GM18951 (cell line): ENCODE measurements at regions of chr9 and their contacts with region 1.

Region 1: GRCh38 chr9:27539479-27540441 is 10.1 kb upstream of the MOB3B start:
- POLR2A ChIP-seq: no peak

Region 2: GRCh38 chr9:27337833-27338526 is 201.8 kb before region 1 on chr9:
- in situ Hi-C with region 1: loop called (anchors 5 kb)
- POLR2A ChIP-seq: no peak

Region 3: GRCh38 chr9:27600256-27600655 is 60.5 kb after region 1 on chr9:
- in situ Hi-C with region 1: no loop called
- POLR2A ChIP-seq: no peak